Activated T-helper 1 cell treated with anti-CD3 and anti-CD28 coated beads, Interleukin-12 subunit alpha, Interleukin-12 subunit beta, Interleukin-2, Interleukin-4 antibody, amounts not matched to agents 30 ng/mL and 10 ng/mL and 1 ng/mL, durations not matched to agents 14 hours and 24 hours and 36 hours (primary cell): ENCODE measurements at regions of chr7 and their contacts with region 1.

Region 1: GRCh38 chr7:107563775-107564552 is at the starts of genes COG5 and DUS4L:
- DNase-seq: peak; percentile 75
- H3K4me3 Mint-ChIP-seq: peak within 1 kb of the TSS; percentile 89
- H3K27ac Mint-ChIP-seq: peak within 1 kb of the TSS; percentile 93
- H3K4me1 Mint-ChIP-seq: peaks cover 62% of the 10 kb centered on the region
- H3K27me3 Mint-ChIP-seq: no peaks in the 10 kb centered on the region
- total RNA-seq, gene COG5: 36.5 and 39.1 TPM in 2 replicates
- total RNA-seq, gene DUS4L: 11.8 and 13.5 TPM in 2 replicates

Region 2: GRCh38 chr7:107551936-107552335 is 12.0 kb before region 1 on chr7:
- intact Hi-C with region 1: loop called (anchors 1 kb)
- DNase-seq: no peak
- H3K4me3 Mint-ChIP-seq: no peak overlapping the region
- H3K27ac Mint-ChIP-seq: no peak overlapping the region
- H3K4me1 Mint-ChIP-seq: peaks cover 26% of the 10 kb centered on the region
- H3K27me3 Mint-ChIP-seq: no peaks in the 10 kb centered on the region

Region 3: DNA sequence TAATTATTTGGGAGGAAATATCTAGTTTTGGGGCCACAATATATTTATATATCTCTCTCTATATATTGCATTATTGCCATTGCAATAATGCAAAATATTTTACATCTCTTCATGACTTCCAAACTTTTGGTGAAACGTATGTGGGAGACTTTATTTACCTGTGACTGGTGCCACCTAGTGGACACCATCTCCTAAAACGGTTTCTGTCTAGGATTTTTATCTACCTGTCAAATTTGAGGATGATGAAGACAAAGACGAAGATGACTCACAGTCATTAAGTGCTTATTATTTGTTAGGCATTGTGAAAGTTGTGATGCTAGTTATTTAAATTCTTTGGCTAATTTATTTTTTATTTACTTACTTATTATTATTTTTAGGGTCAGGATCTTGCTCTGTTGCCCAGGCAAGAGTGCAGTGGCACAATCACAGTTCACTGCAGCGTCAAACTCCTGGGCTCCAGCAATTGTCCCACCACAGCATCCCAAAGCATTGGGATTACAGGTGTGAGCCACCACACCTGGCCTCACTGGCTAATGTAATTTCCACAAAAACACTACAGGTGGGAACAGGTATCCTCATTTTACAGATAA is 161.3 kb after region 1 on chr7:
- intact Hi-C with region 1: loop called (anchors 1 kb)
- DNase-seq: peak; percentile 25
- H3K4me3 Mint-ChIP-seq: no peak overlapping the region
- H3K27ac Mint-ChIP-seq: no peak overlapping the region
- H3K4me1 Mint-ChIP-seq: no peaks in the 10 kb centered on the region
- H3K27me3 Mint-ChIP-seq: peaks cover 16% of the 10 kb centered on the region

Region 4: DNA sequence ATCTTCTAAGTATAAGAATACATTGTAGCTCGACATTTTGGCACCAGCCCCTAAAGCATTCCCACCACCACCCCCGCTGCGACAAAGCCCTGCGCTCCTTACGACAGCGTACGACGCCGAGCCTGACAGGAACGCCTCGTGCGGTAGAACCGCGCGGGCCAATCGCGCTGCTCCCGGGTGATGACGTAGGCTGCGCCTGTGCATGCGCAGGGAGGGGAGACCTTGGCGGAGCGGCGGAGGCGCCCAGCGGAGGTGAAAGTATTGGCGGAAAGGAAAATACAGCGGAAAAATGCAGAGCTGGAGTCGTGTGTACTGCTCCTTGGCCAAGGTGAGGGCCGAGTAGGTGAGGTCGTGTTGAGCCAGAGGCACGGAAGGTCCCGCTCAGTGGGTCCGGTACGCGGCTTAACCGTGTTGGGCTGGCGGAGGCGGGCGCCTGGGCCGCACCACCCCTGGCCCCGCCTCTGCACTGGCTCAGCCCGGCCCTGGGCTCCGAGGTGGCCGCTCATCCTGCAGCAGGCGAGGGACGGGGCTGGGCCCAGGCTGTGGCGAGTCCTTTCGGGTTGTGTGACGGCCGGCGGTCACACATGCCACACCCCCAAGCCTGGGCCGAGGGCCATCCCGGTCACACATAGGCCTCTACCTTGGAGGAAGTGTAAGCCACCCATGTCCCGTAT is 327.1 kb after region 1 on chr7 and contains the start of gene DLD:
- intact Hi-C with region 1: loop called (anchors 2 kb)
- DNase-seq: peak; percentile 93
- H3K4me3 Mint-ChIP-seq: peak within 1 kb of the TSS; percentile 100
- H3K27ac Mint-ChIP-seq: peak within 1 kb of the TSS; percentile 100
- H3K4me1 Mint-ChIP-seq: peaks cover 49% of the 10 kb centered on the region
- H3K27me3 Mint-ChIP-seq: peaks cover 3% of the 10 kb centered on the region
- total RNA-seq, gene DLD: 98.6 and 114 TPM in 2 replicates

Region 5: GRCh38 chr7:108569381-108570145 is 1005.6 kb after region 1 on chr7 and contains the starts of genes DNAJB9 and THAP5:
- intact Hi-C with region 1: loop called (anchors 5 kb)
- DNase-seq: peak; percentile 100
- H3K4me3 Mint-ChIP-seq: peak within 1 kb of the TSS; percentile 95
- H3K27ac Mint-ChIP-seq: peak within 1 kb of the TSS; percentile 96
- H3K4me1 Mint-ChIP-seq: peaks cover 62% of the 10 kb centered on the region
- H3K27me3 Mint-ChIP-seq: no peaks in the 10 kb centered on the region
- total RNA-seq, gene DNAJB9: 16.9 and 20.0 TPM in 2 replicates
- total RNA-seq, gene THAP5: 37.2 and 39.9 TPM in 2 replicates